Mammary epithelial cell (primary cell): ENCODE measurements at regions of chr2 and their contacts with region 1.

Region 1: DNA sequence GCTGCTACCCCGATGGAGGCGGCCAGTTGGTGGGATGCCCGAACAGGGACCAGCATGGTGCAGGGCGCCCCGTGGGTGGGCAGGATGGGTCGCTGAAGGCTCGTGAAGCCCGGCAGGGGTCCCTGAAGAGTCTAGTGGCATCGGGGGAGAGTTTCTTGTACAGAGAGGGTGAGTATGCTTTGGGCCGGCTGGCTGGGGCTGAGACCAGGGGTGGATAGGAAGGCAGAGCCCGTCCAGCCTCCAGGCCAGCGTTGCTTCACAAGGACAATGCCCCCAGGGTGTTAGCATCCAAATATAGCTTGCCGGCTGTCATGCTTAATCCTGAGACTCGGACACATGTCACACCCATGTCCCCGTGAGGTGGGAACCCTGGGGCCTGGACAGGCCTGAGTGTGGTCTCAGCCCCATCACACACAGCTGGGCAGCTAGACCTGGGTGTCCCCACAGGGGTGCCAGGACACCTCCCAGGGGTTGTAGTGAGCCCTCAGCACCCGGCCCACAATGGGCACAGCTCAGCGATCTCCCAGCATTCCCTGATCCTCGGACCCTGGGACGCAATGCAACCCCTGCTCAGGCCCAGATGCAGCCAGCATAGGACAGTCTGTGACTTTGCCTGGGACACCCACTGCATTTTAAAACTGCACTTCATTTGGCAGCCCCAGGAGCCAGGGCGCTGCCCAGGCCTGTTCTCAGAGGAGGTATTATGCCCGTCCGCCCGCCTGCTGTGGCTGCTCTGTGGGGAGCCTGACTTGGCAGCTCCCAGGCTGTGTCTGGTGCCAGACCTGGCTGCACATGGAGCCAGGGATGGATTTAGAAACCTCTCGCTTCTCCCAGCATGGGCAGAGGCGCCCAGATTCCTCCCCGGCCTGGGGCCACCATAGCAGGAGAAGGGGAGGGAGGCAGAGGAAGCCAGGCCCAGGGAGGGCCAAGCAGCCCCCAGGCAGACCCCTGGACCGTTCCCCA is 36.4 kb downstream of the RAMP1 start:
- DNase-seq: peak; percentile 62
- H3K4me3 ChIP-seq: no peak overlapping the region
- H3K27ac ChIP-seq: peak overlapping the region; percentile 9
- H3K4me1 ChIP-seq: peaks cover 35% of the 10 kb centered on the region
- H3K27me3 ChIP-seq: no peaks in the 10 kb centered on the region
- CTCF ChIP-seq: no peak

Region 2: DNA sequence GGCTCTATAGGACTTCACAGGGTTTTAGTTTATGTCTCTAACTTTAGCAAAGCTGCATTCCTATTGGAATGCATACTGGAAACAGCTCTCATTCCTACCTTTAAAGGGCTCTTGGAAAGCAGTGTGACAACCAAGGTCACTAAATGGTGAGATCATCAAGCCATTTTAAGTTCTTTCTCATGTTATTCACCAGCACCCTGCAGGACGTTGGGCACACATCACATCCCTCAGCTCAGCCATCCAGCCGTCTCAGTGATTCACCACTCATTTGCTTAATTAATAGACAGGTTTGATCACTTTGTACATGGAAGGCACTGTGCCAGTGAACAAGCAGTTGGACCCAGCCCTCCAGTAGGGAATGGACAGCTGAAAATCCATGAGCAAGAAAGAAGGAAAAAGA is 129.5 kb before region 1 on chr2:
- CTCF ChIA-PET with region 1: no interaction called
- dilution Hi-C with region 1: no loop called
- in situ Hi-C with region 1: no loop called
- intact Hi-C with region 1: no loop called
- DNase-seq: no peak
- H3K4me3 ChIP-seq: no peak overlapping the region
- H3K27ac ChIP-seq: no peak overlapping the region
- H3K4me1 ChIP-seq: no peaks in the 10 kb centered on the region
- H3K27me3 ChIP-seq: no peaks in the 10 kb centered on the region
- CTCF ChIP-seq: no peak

Region 3: GRCh38 chr2:237874585-237875161 is 21.2 kb before region 1 on chr2:
- CTCF ChIA-PET with region 1: no interaction called
- dilution Hi-C with region 1: no loop called
- in situ Hi-C with region 1: no loop called
- intact Hi-C with region 1: loop called (anchors 2 kb)
- DNase-seq: peak; percentile 76
- H3K4me3 ChIP-seq: no peak overlapping the region
- H3K27ac ChIP-seq: no peak overlapping the region
- H3K4me1 ChIP-seq: peaks cover 38% of the 10 kb centered on the region
- H3K27me3 ChIP-seq: no peaks in the 10 kb centered on the region
- CTCF ChIP-seq: no peak

Region 4: GRCh38 chr2:238106686-238107524 is 211.1 kb after region 1 on chr2:
- CTCF ChIA-PET with region 1: no interaction called
- dilution Hi-C with region 1: no loop called
- in situ Hi-C with region 1: no loop called
- intact Hi-C with region 1: no loop called
- DNase-seq: no peak
- H3K4me3 ChIP-seq: no peak overlapping the region
- H3K27ac ChIP-seq: no peak overlapping the region
- H3K4me1 ChIP-seq: no peaks in the 10 kb centered on the region
- H3K27me3 ChIP-seq: no peaks in the 10 kb centered on the region
- CTCF ChIP-seq: peak; percentile 3 to 24